Gastrocnemius medialis (tissue), 4 donors: ENCODE measurements at regions of chr2 and their contacts with region 1.

Region 1: DNA sequence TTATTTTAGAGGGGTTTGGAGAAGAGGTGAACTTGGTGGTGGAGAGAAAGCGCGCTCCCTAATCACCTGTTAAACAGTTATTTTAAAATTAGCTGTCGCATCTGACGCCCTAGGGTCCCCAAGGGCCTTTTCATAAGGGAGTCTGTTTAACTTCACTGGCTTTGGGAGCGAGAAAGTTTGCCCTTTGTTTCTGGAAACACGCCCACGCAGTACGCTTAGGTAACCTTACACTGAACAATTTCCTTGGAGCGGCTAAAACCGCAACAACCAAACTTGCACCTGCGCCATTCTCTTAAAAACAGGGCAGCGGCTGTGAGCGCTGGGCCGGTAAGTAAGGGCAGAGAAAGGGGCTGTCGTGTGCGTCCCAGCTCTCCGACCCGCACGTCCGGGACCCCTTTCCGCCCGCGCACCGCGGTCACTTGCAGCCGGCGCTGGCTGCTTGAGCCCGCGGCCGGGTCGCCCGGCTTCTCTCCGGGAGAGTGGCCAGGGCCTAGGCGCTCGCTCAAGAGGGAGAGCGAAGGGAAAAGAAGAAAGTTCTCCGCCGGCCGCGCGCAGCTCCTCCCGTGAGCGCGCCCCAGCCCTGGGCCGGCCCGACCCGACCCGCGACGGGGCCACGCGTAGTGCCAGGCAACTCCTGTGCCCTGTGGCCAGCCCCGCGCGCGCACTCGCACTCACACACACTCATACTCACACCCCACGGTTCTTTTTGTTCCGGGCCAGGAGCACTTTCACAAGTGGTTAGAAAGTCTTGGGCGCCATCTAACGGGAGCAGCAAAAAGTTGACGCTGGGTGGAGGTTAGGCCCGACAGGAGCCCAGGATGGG is 19.2 kb downstream of the POU3F3 start:
- DNase-seq: peak; percentile 19 to 32
- ATAC-seq: peak; percentile 91 to 92
- H3K4me3 ChIP-seq: peak overlapping the region; percentile 49 to 71 (median 58)
- H3K27ac ChIP-seq: no peak overlapping the region
- H3K4me1 ChIP-seq: peaks cover 0 to 8% of the 10 kb centered on the region in 2 donors
- H3K27me3 ChIP-seq: peaks cover 48 to 50% (median 49%) of the 10 kb centered on the region in 3 donors
- CTCF ChIP-seq: peak in 3 of 5 experiments; percentile 28 to 52 (median 48)
- POLR2A ChIP-seq: no peak

Region 2: GRCh38 chr2:103161456-103162289 is 1711.4 kb before region 1 on chr2:
- in situ Hi-C with region 1: no loop called
- intact Hi-C with region 1: loop called (anchors 10 kb)
- DNase-seq: no peak
- ATAC-seq: no peak
- H3K4me3 ChIP-seq: no peak overlapping the region
- H3K27ac ChIP-seq: no peak overlapping the region
- H3K4me1 ChIP-seq: no peaks in the 10 kb centered on the region
- H3K27me3 ChIP-seq: no peaks in the 10 kb centered on the region
- CTCF ChIP-seq: peak in 3 of 5 experiments; percentile 16 to 49 (median 48)
- POLR2A ChIP-seq: no peak